Mammary epithelial cell (primary cell): ENCODE measurements at regions of chr1 and their contacts with region 1.

Region 1: DNA sequence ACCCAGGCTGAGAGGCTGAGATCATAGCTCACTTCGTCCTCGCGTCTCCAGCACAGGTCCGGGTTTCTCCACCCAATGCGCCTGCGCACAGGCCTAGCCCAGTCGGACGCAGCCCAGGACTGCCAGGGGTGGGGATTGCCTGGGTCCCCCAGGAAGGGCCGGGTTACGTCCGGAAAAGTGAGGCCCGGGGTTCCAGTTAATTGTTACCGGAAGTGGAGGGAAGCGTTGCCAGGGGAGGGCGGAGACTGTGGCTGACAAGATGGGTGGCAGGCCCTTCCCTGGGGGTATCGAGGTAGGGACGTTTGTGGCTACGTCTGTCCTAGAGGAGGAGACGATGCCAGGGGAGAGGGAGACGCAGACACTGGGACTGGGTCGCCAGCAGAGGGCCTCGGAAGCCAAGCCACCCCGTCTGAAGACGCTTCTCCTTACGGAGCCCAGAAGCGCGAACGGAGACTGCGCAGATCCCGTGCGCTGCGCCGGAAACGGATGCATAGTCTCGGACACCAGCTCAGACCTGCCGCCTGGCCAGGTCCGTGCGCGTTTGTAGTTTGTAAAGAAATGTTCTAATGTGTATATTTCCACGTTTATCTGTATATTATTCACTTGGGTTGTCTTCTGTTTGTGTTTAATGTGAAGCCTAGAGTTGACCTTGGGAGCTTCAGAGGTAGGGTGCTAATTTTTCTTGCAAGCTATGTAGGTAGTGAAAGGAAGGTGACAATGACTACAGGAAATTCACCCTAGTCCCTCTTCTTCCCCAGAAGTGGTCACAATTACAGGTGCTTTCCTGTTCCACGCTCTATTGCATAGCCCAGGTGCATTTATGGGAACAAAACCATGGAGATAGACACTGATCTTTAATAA is 7.3 kb downstream of the RSRP1 start:
- DNase-seq: peak; percentile 87
- H3K4me3 ChIP-seq: peak overlapping the region; percentile 33 to 49 (median 45)
- H3K27ac ChIP-seq: peak overlapping the region; percentile 72
- H3K4me1 ChIP-seq: peaks cover 33% of the 10 kb centered on the region
- H3K27me3 ChIP-seq: no peaks in the 10 kb centered on the region
- CTCF ChIP-seq: peak; percentile 40 to 75

Region 2: DNA sequence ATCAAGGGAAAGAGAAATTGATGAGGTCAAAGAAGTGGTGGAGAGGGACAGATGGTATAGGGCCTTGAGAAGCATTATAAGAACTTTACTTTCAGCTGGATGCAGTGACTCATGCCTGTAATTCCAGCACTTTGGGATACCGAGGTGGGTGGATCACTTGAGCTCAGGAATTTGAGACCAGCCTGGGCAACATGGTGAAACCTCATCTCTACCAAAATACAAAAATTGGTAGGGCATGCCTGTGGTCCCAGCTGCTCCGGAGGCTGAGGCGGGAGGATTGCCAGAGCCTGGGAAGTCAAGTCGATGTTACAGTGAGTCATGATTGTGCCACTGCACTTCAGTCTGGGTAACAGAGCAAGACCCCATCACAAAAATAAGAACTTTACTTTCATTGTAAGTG is 104.0 kb after region 1 on chr1:
- CTCF ChIA-PET with region 1: no interaction called
- dilution Hi-C with region 1: no loop called
- in situ Hi-C with region 1: loop called in 1 of 2 experiments (anchors 10 kb)
- intact Hi-C with region 1: no loop called
- DNase-seq: peak; percentile 61
- H3K4me3 ChIP-seq: no peak overlapping the region
- H3K27ac ChIP-seq: peak overlapping the region; percentile 13
- H3K4me1 ChIP-seq: peaks cover 25% of the 10 kb centered on the region
- H3K27me3 ChIP-seq: no peaks in the 10 kb centered on the region
- CTCF ChIP-seq: no peak

Region 3: GRCh38 chr1:25819576-25820246 is 579.8 kb after region 1 on chr1 and contains the start of gene MTFR1L:
- CTCF ChIA-PET with region 1: no interaction called
- dilution Hi-C with region 1: no loop called
- in situ Hi-C with region 1: loop called in 1 of 2 experiments (anchors 25 kb)
- intact Hi-C with region 1: loop called (anchors 10 kb)
- DNase-seq: peak; percentile 90
- H3K4me3 ChIP-seq: peak within 1 kb of the TSS; percentile 72 to 90 (median 88)
- H3K27ac ChIP-seq: peak within 1 kb of the TSS; percentile 73
- H3K4me1 ChIP-seq: peaks cover 23% of the 10 kb centered on the region
- H3K27me3 ChIP-seq: no peaks in the 10 kb centered on the region
- CTCF ChIP-seq: no peak
- total RNA-seq, gene MTFR1L: 31.2 to 39.0 TPM

Region 4: DNA sequence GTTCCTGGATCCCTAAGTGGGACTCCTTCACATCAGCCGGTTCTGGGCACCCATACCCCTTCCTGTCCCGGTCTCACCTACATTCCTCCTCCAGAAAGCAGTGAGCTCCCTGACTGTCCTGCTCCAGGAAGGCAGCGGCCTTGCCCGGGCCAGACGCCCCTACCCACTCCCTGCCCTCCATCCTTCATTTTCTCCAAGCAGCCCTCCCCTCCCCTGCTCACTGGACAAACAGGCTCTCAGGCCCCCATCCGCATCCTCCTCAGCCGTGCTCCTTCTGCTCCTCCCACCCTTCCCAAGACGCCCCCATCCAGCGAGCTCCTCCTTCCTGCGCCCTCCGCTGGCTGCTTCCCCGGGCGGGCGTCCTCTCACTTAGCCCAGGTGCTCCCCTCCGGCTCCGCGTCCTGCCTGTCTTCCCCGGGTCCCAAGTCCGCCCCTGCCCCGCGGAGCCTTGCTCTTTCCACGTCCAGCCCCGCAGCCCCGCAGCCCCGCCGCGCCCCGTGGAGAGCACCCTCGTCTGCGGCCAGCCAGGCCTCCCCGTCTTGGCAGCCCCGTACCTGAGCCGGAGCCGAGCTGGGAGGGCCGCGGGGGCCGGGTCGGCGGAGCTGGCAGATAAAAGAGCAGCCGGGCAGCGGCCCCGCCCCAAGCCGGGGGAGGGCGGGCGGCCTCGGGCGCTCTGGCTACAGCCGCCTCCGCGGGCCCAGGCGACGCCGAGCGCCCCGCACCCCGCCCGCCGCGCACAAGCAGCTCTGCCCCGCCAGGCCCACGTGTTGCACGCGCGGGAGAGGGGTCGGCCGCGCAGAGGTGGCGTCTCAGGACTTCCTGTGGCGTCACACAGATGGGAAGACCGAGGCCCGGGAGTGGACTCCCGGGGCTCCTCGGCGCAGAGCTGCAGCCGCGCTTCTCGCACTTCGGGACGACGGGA is 635.3 kb after region 1 on chr1 and contains the start of gene PAQR7:
- CTCF ChIA-PET with region 1: interaction called, 12 read pairs
- dilution Hi-C with region 1: no loop called
- in situ Hi-C with region 1: no loop called
- intact Hi-C with region 1: no loop called
- DNase-seq: peak; percentile 64
- H3K4me3 ChIP-seq: peak within 1 kb of the TSS; percentile 67 to 79 (median 71)
- H3K27ac ChIP-seq: peak within 1 kb of the TSS; percentile 4
- H3K4me1 ChIP-seq: peaks cover 56% of the 10 kb centered on the region
- H3K27me3 ChIP-seq: no peaks in the 10 kb centered on the region
- CTCF ChIP-seq: peak in 1 of 2 donors; percentile 23
- total RNA-seq, gene PAQR7: 21.6 to 28.3 TPM